ENCODE measurements at regions of chr11 and their contacts with region 1.

Region 1: DNA sequence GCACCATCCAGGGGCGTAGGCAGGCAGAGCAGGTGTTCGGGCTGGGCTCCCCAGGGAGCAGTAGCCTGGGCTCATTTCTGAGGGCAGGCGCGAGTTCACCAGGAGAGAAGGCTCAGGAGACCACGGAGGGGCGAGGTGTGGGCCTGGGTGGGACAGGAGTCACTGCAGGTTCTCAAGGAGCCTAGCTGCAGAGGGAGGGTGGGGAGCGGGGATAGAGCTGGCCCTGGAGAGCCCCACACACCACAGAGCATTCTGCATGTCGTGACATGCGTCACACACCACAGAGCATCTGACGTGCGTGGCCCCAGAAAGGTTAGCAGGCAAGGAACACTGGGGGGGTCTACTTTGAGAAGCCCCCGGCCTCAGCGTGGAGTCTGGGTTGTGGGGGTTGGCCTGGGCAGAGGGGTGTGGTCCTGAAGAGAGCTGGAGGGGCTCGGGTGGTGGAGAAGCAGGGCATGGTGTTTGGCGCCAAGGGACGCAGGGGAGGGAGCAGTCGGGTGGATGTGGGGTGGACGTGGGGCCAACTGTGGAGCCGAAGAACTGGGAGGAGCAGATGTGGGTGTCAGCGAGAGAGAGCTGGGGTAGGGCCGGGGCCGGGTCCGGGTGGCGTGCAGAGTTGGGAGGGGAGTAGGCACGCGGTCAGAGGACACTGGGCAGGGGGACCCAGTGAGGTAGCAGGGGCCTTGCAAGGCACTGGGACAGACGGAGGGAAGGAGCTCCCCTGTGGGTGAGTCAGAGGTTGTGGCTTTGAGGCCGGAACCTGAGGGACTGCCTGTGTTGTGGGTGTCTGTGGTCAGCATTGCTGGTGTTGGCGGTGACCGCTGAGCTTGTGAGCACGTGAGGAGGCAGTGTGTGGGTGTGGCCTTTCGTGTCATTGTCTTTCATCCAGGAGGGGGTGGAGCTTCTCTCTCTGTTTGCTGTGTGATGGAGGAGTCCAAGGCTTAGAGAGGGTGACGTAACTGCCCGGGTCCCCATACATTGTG is 25.5 kb downstream of the CTTN start:
- DNase-seq: peak; percentile 66 to 82 (median 70)
- ATAC-seq: peak; percentile 67
- H3K4me3 ChIP-seq: no peak overlapping the region
- H3K27ac ChIP-seq: peak overlapping the region; percentile 22; the same call in 1 of the 3 replicates
- H3K4me1 ChIP-seq: peaks cover 11 to 37% of the 10 kb centered on the region in 2 experiments; a peak in 4 of 5 replicates
- H3K27me3 ChIP-seq: no peaks in the 10 kb centered on the region
- CTCF ChIP-seq: no peak
- EP300 ChIP-seq: peak; percentile 30; the same call in 1 of the 2 replicates
- POLR2A ChIP-seq: no peak
- RAD21 ChIP-seq: no peak

Region 2: DNA sequence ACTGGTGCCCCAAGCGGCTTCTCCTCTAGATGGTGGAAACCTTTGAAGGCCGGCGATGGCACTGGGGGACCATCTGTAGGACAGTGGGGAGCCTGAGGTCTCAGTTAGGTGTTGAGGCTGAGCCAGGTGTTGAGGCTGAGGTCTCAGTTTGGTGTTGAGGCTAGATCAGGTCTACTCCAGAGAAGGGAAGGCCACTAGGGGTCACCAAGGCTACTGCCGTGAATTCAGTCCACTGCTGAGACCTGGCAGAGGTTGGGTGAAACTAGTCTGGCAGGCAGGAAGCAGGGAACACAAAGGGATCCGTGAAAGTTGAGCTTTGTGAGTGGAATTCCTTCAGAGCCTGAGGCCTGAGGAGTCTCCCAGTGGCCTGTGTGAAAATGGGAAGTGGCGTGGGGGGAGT is 480.7 kb before region 1 on chr11:
- CTCF ChIA-PET with region 1: no interaction called
- POLR2A ChIA-PET with region 1: no interaction called
- in situ Hi-C with region 1: no loop called
- intact Hi-C with region 1: no loop called
- DNase-seq: peak in 2 of 4 experiments; percentile 37 to 53
- ATAC-seq: peak; percentile 80
- H3K4me3 ChIP-seq: no peak overlapping the region
- H3K27ac ChIP-seq: no peak overlapping the region
- H3K4me1 ChIP-seq: peaks cover 10 to 49% of the 10 kb centered on the region in 2 experiments; a peak in 4 of 5 replicates
- H3K27me3 ChIP-seq: peaks cover 4 to 33% of the 10 kb centered on the region in 2 experiments
- CTCF ChIP-seq: peak; percentile 42 to 63 (median 57)
- EP300 ChIP-seq: no peak
- POLR2A ChIP-seq: no peak
- RAD21 ChIP-seq: peak; percentile 36 to 56; a peak in 3 of 4 replicates

Region 3: DNA sequence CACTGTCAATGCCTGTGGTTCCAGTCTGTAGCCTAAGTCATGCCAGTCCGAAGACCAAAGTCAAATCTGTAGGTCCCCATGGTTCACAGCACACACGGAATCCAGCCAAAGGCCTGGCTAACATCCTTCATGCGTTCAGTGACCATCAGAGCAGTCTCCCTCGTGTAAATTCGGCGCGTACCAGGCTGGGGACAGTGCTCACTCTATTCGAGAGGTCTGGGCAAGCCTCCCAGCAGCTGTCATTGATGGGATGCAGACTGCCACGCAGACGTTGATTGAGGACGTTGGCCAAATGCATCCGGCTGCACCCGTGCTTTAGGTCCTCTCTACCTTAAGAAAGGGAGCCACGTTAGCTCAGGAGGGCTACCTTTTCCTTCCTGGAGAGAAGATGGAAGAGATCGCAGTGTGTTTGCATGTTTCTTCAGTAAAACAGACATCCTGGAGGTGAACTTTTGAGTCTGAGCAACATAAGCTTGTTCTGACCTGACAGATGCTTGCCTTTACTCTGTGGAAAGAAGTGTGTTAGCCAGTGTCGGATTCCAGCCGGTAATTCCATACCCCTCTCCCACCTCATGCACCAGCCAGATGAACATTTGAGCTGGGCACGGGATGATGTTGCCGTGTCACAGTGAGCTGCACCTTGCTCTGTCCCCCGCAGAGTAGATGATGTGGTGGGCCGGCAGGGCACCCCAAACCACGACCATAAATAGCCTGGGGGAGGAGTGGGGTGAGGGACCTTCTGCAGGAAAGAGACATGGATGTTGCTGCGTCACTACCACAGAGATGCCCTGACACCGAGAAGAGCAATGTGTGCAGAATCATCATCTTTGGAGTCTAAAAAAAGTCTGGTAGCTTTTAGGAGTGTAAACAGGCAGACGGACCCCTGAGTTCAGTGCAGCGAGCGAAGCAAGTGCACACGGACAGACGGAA is 13.3 kb before region 1 on chr11:
- CTCF ChIA-PET with region 1: no interaction called
- POLR2A ChIA-PET with region 1: interaction called, 10 read pairs
- in situ Hi-C with region 1: no loop called
- intact Hi-C with region 1: no loop called
- DNase-seq: no peak
- ATAC-seq: no peak
- H3K4me3 ChIP-seq: no peak overlapping the region
- H3K27ac ChIP-seq: no peak overlapping the region
- H3K4me1 ChIP-seq: no peaks in the 10 kb centered on the region
- H3K27me3 ChIP-seq: no peaks in the 10 kb centered on the region
- CTCF ChIP-seq: no peak
- EP300 ChIP-seq: no peak
- POLR2A ChIP-seq: no peak
- RAD21 ChIP-seq: no peak

Region 4: DNA sequence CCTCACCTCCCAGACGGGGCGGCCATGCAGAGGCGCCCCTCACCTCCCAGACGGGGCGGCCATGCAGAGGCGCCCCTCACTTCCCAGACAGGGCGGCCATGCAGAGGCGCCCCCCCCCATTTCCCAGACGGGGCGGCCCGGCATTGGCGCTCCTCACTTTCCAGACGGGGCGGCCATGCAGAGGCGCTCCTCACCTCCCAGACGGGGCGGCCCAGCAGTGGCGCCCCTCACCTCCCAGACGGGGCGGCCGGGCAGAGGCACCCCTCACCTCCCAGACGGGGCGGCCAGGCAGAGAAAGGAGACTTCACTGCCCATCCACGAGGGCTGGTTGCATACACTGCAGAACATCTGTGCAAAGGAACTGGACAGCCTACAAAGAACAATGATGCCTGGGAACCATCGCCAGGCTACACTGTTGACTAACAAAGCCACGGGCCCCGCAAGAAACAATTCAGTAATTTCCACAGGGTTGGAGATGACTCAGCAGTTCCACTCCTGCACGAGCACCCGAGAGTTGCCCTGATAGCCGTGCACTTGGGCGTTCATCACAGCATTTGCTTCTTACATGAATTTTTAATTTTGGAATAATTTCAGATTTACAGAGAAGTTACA is 33.2 kb after region 1 on chr11:
- CTCF ChIA-PET with region 1: no interaction called
- POLR2A ChIA-PET with region 1: no interaction called
- in situ Hi-C with region 1: no loop called
- intact Hi-C with region 1: loop called (anchors 5 kb)
- DNase-seq: peak; percentile 27 to 57 (median 38)
- ATAC-seq: peak; percentile 74
- H3K4me3 ChIP-seq: no peak overlapping the region
- H3K27ac ChIP-seq: no peak overlapping the region
- H3K4me1 ChIP-seq: peaks cover 8 to 13% of the 10 kb centered on the region in 2 experiments; a peak in 4 of 5 replicates
- H3K27me3 ChIP-seq: peaks cover 8 to 19% of the 10 kb centered on the region in 2 experiments; a peak in 4 of 5 replicates
- CTCF ChIP-seq: no peak
- EP300 ChIP-seq: no peak
- POLR2A ChIP-seq: no peak
- RAD21 ChIP-seq: peak in 1 of 2 experiments; percentile 23; a peak in 1 of 4 replicates